Prostate gland (tissue), 2 donors: ENCODE measurements at regions of chr6 and their contacts with region 1.

Region 1: GRCh38 chr6:10694302-10695085 is at the starts of genes C6orf52 and PAK1IP1:
- DNase-seq: peak; percentile 94
- H3K4me3 ChIP-seq: peak within 1 kb of the TSS; percentile 68 to 90
- H3K27ac ChIP-seq: peak within 1 kb of the TSS; percentile 92 to 94
- H3K4me1 ChIP-seq: peaks cover 9% of the 10 kb centered on the region
- H3K27me3 ChIP-seq: no peaks in the 10 kb centered on the region
- CTCF ChIP-seq: peak in 1 of 4 experiments; percentile 4
- POLR2A ChIP-seq: peak; percentile 80
- total RNA-seq, gene C6orf52: 3.3 TPM in 1 of 2 donors, not detected in the other
- total RNA-seq, gene PAK1IP1: 12.2 to 36.7 TPM

Region 2: DNA sequence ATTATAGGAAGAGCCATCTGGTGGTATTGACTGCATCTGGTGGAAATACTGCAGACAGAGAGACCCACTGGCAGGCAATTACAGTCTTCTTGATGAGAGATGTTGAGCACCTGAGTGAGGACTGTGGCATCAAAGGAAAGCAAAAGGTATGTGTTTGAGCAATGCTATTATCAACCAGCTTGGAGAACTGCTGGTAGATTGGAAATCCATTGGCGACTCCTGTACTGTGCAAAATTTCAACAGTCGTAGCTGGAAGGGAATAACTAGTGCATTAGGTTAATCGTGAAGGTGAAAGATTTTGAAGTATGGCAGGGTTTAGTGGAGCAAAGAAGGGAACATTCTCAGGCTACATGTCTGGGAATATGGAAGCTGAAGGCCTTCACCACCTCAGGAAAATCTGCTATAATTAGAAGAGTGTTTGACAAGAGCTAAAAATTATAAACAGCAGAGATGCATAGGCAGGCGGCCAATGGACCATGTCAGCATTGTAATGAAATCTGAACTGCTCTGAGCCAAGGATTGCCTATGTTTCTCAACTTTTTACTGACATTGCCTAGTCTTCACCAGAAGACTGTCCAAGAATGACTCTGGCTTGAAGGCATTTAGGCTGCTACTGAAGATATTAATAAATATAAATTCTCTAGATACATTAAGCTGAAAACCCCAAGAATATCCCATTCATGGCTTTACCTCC is 84.4 kb before region 1 on chr6:
- intact Hi-C with region 1: loop called (anchors 10 kb)
- DNase-seq: peak; percentile 24
- H3K4me3 ChIP-seq: no peak overlapping the region
- H3K27ac ChIP-seq: peak overlapping the region in 1 of 2 donors; percentile 80
- H3K4me1 ChIP-seq: peaks cover 5% of the 10 kb centered on the region
- H3K27me3 ChIP-seq: no peaks in the 10 kb centered on the region
- CTCF ChIP-seq: no peak
- POLR2A ChIP-seq: no peak

Region 3: GRCh38 chr6:10722820-10723566 is 28.5 kb after region 1 on chr6 and contains the start of gene TMEM14C:
- intact Hi-C with region 1: loop called (anchors 2 kb)
- DNase-seq: peak; percentile 99
- H3K4me3 ChIP-seq: peak within 1 kb of the TSS; percentile 49 to 60
- H3K27ac ChIP-seq: peak within 1 kb of the TSS; percentile 80 to 91
- H3K4me1 ChIP-seq: peaks cover 8% of the 10 kb centered on the region
- H3K27me3 ChIP-seq: no peaks in the 10 kb centered on the region
- CTCF ChIP-seq: peak in 2 of 4 experiments; percentile 6 to 17
- POLR2A ChIP-seq: peak; percentile 92
- total RNA-seq, gene TMEM14C: 99.7 to 208 TPM